H1 (cell line): ENCODE measurements at regions of chr2 and their contacts with region 1.

Region 1: GRCh38 chr2:128619471-128620325 is 301.0 kb upstream of the HS6ST1 start:
- DNase-seq: no peak
- H3K4me3 ChIP-seq: no peak overlapping the region
- H3K27ac ChIP-seq: no peak overlapping the region
- H3K4me1 ChIP-seq: peaks cover 0 to 3% (median 0%) of the 10 kb centered on the region in 4 experiments; a peak in 1 of 7 replicates
- H3K27me3 ChIP-seq: no peaks in the 10 kb centered on the region
- CTCF ChIP-seq: no peak
- EP300 ChIP-seq: no peak
- POLR2A ChIP-seq: no peak
- RAD21 ChIP-seq: no peak

Region 2: DNA sequence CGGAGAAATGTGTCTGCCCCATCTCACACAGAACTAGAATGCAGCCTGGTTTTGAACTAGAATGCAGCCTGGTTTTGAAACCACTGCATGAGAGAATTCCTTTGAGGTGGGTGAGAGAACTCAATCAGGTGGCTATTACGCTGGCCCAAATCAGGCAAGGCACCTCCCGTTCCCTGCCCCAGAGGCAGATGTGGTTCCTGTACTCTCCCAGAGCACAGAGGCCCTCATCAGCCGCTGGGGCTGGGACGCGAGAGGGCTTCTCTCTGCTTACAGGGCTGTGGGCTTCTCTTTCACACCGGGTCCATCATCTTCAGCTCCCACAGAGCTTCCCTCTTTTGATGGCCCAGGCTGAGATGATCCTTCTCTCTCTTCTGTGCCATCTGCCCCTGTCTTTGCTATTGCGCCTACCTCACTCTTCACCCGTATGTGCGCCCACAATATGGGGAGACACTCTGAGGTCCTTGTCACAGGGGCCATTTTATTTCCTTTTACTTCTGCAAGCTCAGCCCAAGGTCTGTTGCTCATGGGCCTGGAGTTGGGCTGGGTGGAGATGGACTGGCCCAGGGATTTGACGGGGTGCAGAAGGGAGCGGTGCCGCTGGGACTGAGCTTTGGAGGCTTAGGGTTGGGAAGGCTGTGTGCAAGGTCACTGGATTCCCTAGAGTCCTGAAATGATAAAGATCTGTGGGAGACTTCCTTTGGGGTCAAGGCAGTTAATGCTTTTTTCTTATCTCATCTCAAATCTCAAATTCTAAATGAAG is 216.6 kb before region 1 on chr2:
- CTCF ChIA-PET with region 1: no interaction called
- POLR2A ChIA-PET with region 1: no interaction called
- DNase-seq: no peak
- H3K4me3 ChIP-seq: no peak overlapping the region
- H3K27ac ChIP-seq: no peak overlapping the region
- H3K4me1 ChIP-seq: peaks cover 0 to 13% (median 6%) of the 10 kb centered on the region in 4 experiments; a peak in 6 of 7 replicates
- H3K27me3 ChIP-seq: no peaks in the 10 kb centered on the region
- CTCF ChIP-seq: no peak
- EP300 ChIP-seq: no peak
- POLR2A ChIP-seq: no peak
- RAD21 ChIP-seq: no peak

Region 3: GRCh38 chr2:128607911-128608506 is 11.7 kb before region 1 on chr2:
- CTCF ChIA-PET with region 1: interaction called, 11 read pairs
- POLR2A ChIA-PET with region 1: interaction called, 3 read pairs
- DNase-seq: no peak
- H3K4me3 ChIP-seq: no peak overlapping the region
- H3K27ac ChIP-seq: no peak overlapping the region
- H3K4me1 ChIP-seq: peaks cover 0 to 5% (median under 1%) of the 10 kb centered on the region in 4 experiments; a peak in 2 of 7 replicates
- H3K27me3 ChIP-seq: no peaks in the 10 kb centered on the region
- CTCF ChIP-seq: no peak
- EP300 ChIP-seq: no peak
- POLR2A ChIP-seq: no peak
- RAD21 ChIP-seq: no peak